Activated CD4-positive, alpha-beta memory T cell treated with anti-CD3 and anti-CD28 coated beads for 36 hours (primary cell): ENCODE measurements at regions of chr16 and their contacts with region 1.

Region 1: GRCh38 chr16:58515125-58515870 is at the start of gene SETD6:
- DNase-seq: peak; percentile 85
- H3K4me3 Mint-ChIP-seq: peak within 1 kb of the TSS; percentile 89
- H3K27ac Mint-ChIP-seq: peak within 1 kb of the TSS; percentile 76
- H3K4me1 Mint-ChIP-seq: peaks cover 45% of the 10 kb centered on the region
- H3K27me3 Mint-ChIP-seq: no peaks in the 10 kb centered on the region
- total RNA-seq, gene SETD6: 12.9 to 14.5 TPM

Region 2: DNA sequence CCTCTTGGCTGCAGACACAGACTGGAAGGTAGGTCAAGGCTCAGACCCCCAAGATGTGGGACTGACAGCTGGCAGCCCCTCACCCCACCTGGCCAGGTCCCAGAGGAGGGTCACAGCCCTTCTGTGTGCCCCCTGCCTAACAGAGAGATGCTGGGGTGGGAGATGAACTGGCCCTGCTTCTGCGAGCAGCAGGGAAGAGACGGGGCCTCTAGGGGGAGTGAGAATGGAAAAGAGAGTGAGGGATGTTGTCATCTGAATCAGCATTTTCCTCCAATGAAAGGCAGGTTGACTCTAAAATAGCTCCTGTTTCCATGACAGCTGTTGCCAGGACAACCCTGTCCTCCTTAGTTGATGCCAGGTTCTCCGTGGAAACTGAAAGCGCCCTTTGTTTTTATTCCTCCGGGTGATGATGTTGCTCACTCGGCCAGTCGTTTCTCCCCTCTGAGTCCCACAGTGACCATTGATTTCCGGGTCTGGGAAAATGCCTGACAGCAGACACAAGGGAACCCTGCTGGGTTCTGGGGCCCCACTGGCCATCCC is 20.2 kb before region 1 on chr16:
- CTCF ChIA-PET with region 1: interaction called, 10 read pairs
- POLR2A ChIA-PET with region 1: interaction called, 3 read pairs
- intact Hi-C with region 1: no loop called
- DNase-seq: peak; percentile 85
- H3K4me3 Mint-ChIP-seq: no peak overlapping the region
- H3K27ac Mint-ChIP-seq: no peak overlapping the region
- H3K4me1 Mint-ChIP-seq: peaks cover 15% of the 10 kb centered on the region
- H3K27me3 Mint-ChIP-seq: peaks cover 1% of the 10 kb centered on the region

Region 3: GRCh38 chr16:58661199-58661830 is 146.0 kb after region 1 on chr16:
- CTCF ChIA-PET with region 1: interaction called, 9 read pairs
- POLR2A ChIA-PET with region 1: no interaction called
- intact Hi-C with region 1: loop called (anchors 1 kb)
- DNase-seq: peak; percentile 14
- H3K4me3 Mint-ChIP-seq: no peak overlapping the region
- H3K27ac Mint-ChIP-seq: no peak overlapping the region
- H3K4me1 Mint-ChIP-seq: no peaks in the 10 kb centered on the region
- H3K27me3 Mint-ChIP-seq: no peaks in the 10 kb centered on the region